ENCODE measurements at regions of chr1 and their contacts with region 1.

Region 1: DNA sequence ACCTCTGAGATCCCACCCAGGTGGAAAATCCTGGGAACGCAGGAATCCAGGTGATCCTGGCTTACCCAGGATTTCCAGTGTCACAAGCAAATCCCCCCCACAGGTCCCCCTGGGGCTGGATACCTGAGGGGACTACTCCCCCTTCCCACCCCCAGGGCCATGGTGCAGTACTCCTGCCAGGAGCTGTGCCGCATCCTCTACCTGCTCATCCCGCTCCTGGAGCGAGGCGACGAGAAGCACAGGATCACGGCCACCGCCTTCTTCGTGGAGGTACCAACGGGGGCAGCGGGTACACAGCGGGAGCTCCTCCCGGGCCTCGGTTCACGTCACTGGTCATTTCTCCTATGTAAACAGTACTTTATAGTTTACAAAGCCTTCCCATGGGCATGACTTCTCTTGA is 20.4 kb upstream of the TTC4 start:
- DNase-seq: no peak
- ATAC-seq: no peak
- H3K4me3 ChIP-seq: no peak overlapping the region
- H3K4me3 Mint-ChIP-seq: no peak overlapping the region
- H3K27ac ChIP-seq: no peak overlapping the region
- H3K27ac Mint-ChIP-seq: no peak overlapping the region
- H3K4me1 ChIP-seq: no peaks in the 10 kb centered on the region
- H3K4me1 Mint-ChIP-seq: no peaks in the 10 kb centered on the region
- H3K27me3 ChIP-seq: peaks cover 0 to 34% of the 10 kb centered on the region in 2 experiments
- H3K27me3 Mint-ChIP-seq: peaks cover 10 to 17% of the 10 kb centered on the region in 2 donors

Region 2: GRCh38 chr1:54866841-54867716 is 171.9 kb after region 1 on chr1:
- CTCF ChIA-PET with region 1: interaction called in 1 of 2 experiments, 11 read pairs
- POLR2A ChIA-PET with region 1: no interaction called
- DNase-seq: no peak
- ATAC-seq: no peak
- H3K4me3 ChIP-seq: no peak overlapping the region
- H3K4me3 Mint-ChIP-seq: no peak overlapping the region
- H3K27ac ChIP-seq: no peak overlapping the region
- H3K27ac Mint-ChIP-seq: no peak overlapping the region
- H3K4me1 ChIP-seq: no peaks in the 10 kb centered on the region
- H3K4me1 Mint-ChIP-seq: no peaks in the 10 kb centered on the region
- H3K27me3 ChIP-seq: no peaks in the 10 kb centered on the region
- H3K27me3 Mint-ChIP-seq: no peaks in the 10 kb centered on the region